ENCODE measurements at regions of chr4 and their contacts with region 1.

Region 1: DNA sequence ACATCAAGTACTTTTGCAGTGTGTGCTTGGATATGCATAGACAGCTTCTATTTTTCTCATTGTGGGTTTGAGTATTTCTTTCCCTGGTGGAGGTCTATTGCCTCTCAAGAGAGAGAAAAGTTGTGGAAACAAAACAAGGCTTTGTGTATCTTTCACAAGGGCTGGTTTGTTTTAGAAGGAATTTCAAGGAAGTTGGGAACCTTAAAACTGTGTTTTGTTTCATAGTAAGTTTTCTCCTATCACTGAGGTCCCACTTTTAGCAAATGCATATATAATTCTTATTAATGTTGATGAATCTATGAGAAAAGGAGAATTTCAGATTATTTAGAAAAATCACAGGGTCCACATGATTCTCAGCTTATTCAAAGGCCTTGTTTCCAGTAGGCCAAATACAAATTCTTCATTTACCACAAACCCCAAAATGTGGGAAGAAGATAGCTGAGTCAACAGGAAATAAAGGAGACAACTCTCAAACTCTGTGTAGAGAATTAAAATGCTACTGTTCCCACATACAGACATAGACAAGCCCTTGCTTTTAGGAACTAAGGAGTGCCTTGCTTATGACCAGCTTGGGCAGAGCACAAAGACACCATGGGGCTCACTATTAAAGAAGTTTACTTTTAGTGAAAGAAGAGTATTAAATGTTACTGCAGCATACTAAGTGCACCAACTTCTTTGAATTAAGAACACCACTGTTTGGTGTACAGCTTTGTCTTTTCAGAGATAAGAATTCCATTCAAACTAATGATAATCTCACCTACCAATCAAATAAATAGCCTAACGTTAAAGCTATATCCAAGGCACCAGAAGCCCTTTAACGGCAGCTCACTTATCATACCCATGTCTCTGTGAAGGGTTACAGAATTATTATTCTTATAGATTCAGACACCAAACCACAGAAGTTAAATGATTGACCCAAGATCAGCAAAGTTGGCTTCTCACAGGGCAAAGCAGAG is 177.4 kb upstream of the LEF1 start:
- DNase-seq: no peak
- ATAC-seq: no peak
- H3K4me3 ChIP-seq: no peak overlapping the region
- H3K4me3 Mint-ChIP-seq: peak overlapping the region in 2 of 10 donors; percentile 41 to 46
- H3K27ac ChIP-seq: no peak overlapping the region
- H3K27ac Mint-ChIP-seq: peak overlapping the region in 5 of 9 donors; percentile 7 to 94 (median 39)
- H3K4me1 ChIP-seq: peaks cover 12 to 37% of the 10 kb centered on the region in 2 donors
- H3K4me1 Mint-ChIP-seq: peaks cover 31 to 76% (median 51%) of the 10 kb centered on the region in 7 donors
- H3K27me3 ChIP-seq: no peaks in the 10 kb centered on the region
- H3K27me3 Mint-ChIP-seq: peaks cover 0 to 5% (median 0%) of the 10 kb centered on the region in 5 donors

Region 2: DNA sequence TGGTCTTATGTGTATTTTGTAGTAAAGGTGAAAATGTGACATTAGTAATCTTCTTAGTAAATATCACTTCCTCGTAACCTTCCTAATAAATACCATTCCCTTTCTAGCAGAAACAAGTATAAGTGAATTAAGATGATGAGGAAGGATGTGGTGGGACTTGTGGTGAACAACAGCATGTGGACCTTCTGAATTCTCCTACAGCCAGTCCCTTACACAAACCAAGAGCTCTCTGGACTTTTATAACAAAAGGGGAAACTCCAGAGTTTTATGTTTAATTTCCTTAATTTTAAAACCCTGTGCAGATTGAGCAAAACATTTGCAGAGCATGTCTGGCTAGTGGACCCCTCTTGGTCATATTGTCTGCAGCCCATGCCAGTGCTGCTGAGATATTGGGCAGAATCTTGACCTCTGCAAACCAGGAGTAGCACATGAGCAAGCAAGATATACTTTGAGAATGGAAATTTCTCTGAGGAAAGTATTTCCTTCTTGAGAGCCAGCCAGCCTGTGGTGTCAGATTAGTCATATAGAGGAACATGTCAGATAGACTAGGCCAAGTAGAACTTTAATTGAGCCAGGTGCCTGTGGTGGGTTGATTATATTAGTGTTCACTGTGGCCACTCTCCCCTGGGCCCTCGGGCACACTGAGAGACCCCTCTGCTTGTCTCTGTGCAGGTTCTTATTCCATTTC is 1638.2 kb before region 1 on chr4:
- CTCF ChIA-PET with region 1: no interaction called
- POLR2A ChIA-PET with region 1: no interaction called
- intact Hi-C with region 1: no loop called
- DNase-seq: no peak
- ATAC-seq: peak; percentile 54
- H3K4me3 ChIP-seq: no peak overlapping the region
- H3K4me3 Mint-ChIP-seq: no peak overlapping the region
- H3K27ac ChIP-seq: no peak overlapping the region
- H3K27ac Mint-ChIP-seq: no peak overlapping the region
- H3K4me1 ChIP-seq: no peaks in the 10 kb centered on the region
- H3K4me1 Mint-ChIP-seq: peaks cover 0 to 2% (median 0%) of the 10 kb centered on the region in 7 donors
- H3K27me3 ChIP-seq: no peaks in the 10 kb centered on the region
- H3K27me3 Mint-ChIP-seq: no peaks in the 10 kb centered on the region

Region 3: GRCh38 chr4:108313546-108314339 is 32.4 kb before region 1 on chr4:
- CTCF ChIA-PET with region 1: no interaction called
- POLR2A ChIA-PET with region 1: interaction called, 3 read pairs
- intact Hi-C with region 1: loop called in 1 of 2 experiments (anchors 1 kb)
- DNase-seq: no peak
- ATAC-seq: no peak
- H3K4me3 ChIP-seq: no peak overlapping the region
- H3K4me3 Mint-ChIP-seq: peak overlapping the region in 6 of 10 donors; percentile 50 to 84 (median 76)
- H3K27ac ChIP-seq: no peak overlapping the region
- H3K27ac Mint-ChIP-seq: peak overlapping the region in 5 of 9 donors; percentile 14 to 89 (median 74)
- H3K4me1 ChIP-seq: peaks cover 0 to 33% of the 10 kb centered on the region in 2 donors
- H3K4me1 Mint-ChIP-seq: peaks cover 23 to 63% (median 57%) of the 10 kb centered on the region in 7 donors
- H3K27me3 ChIP-seq: no peaks in the 10 kb centered on the region
- H3K27me3 Mint-ChIP-seq: peaks cover 0 to 28% (median 0%) of the 10 kb centered on the region in 5 donors

Region 4: GRCh38 chr4:108360754-108361445 is 14.8 kb after region 1 on chr4:
- CTCF ChIA-PET with region 1: interaction called, 8 read pairs
- POLR2A ChIA-PET with region 1: interaction called, 16 read pairs
- intact Hi-C with region 1: loop called (anchors 1 kb)
- DNase-seq: peak in 1 of 9 donors; percentile 9
- ATAC-seq: no peak
- H3K4me3 ChIP-seq: no peak overlapping the region
- H3K4me3 Mint-ChIP-seq: peak overlapping the region; percentile 8 to 82 (median 69)
- H3K27ac ChIP-seq: no peak overlapping the region
- H3K27ac Mint-ChIP-seq: peak overlapping the region; percentile 43 to 96 (median 91)
- H3K4me1 ChIP-seq: peaks cover 15 to 58% of the 10 kb centered on the region in 2 donors
- H3K4me1 Mint-ChIP-seq: peaks cover 34 to 77% (median 74%) of the 10 kb centered on the region in 7 donors
- H3K27me3 ChIP-seq: no peaks in the 10 kb centered on the region
- H3K27me3 Mint-ChIP-seq: peaks cover 0 to 14% (median 0%) of the 10 kb centered on the region in 5 donors

Region 5: GRCh38 chr4:108396900-108397497 is 50.9 kb after region 1 on chr4:
- CTCF ChIA-PET with region 1: no interaction called
- POLR2A ChIA-PET with region 1: no interaction called
- intact Hi-C with region 1: loop called in 1 of 2 experiments (anchors 5 kb)
- DNase-seq: no peak
- ATAC-seq: no peak
- H3K4me3 ChIP-seq: no peak overlapping the region
- H3K4me3 Mint-ChIP-seq: no peak overlapping the region
- H3K27ac ChIP-seq: no peak overlapping the region
- H3K27ac Mint-ChIP-seq: no peak overlapping the region
- H3K4me1 ChIP-seq: peaks cover 0 to 5% of the 10 kb centered on the region in 2 donors
- H3K4me1 Mint-ChIP-seq: peaks cover 2 to 28% (median 16%) of the 10 kb centered on the region in 7 donors
- H3K27me3 ChIP-seq: no peaks in the 10 kb centered on the region
- H3K27me3 Mint-ChIP-seq: peaks cover 0 to 3% (median 0%) of the 10 kb centered on the region in 5 donors

Region 6: GRCh38 chr4:108512615-108513505 is 166.7 kb after region 1 on chr4:
- CTCF ChIA-PET with region 1: no interaction called
- POLR2A ChIA-PET with region 1: interaction called, 5 read pairs
- intact Hi-C with region 1: loop called in 1 of 2 experiments (anchors 1 kb)
- DNase-seq: peak in 7 of 9 donors; percentile 42 to 68 (median 58)
- ATAC-seq: peak; percentile 82
- H3K4me3 ChIP-seq: peak overlapping the region; percentile 6
- H3K4me3 Mint-ChIP-seq: peak overlapping the region; percentile 72 to 87 (median 80)
- H3K27ac ChIP-seq: no peak overlapping the region
- H3K27ac Mint-ChIP-seq: peak overlapping the region in 7 of 9 donors; percentile 33 to 79 (median 71)
- H3K4me1 ChIP-seq: peaks cover 0 to 10% of the 10 kb centered on the region in 2 donors
- H3K4me1 Mint-ChIP-seq: peaks cover 9 to 37% (median 23%) of the 10 kb centered on the region in 7 donors
- H3K27me3 ChIP-seq: no peaks in the 10 kb centered on the region
- H3K27me3 Mint-ChIP-seq: peaks cover 0 to 11% (median 0%) of the 10 kb centered on the region in 5 donors

Measured in naive thymus-derived CD4-positive, alpha-beta T cell (primary cell).